ENCODE measurements at regions of chr10 and their contacts with region 1.

Region 1: DNA sequence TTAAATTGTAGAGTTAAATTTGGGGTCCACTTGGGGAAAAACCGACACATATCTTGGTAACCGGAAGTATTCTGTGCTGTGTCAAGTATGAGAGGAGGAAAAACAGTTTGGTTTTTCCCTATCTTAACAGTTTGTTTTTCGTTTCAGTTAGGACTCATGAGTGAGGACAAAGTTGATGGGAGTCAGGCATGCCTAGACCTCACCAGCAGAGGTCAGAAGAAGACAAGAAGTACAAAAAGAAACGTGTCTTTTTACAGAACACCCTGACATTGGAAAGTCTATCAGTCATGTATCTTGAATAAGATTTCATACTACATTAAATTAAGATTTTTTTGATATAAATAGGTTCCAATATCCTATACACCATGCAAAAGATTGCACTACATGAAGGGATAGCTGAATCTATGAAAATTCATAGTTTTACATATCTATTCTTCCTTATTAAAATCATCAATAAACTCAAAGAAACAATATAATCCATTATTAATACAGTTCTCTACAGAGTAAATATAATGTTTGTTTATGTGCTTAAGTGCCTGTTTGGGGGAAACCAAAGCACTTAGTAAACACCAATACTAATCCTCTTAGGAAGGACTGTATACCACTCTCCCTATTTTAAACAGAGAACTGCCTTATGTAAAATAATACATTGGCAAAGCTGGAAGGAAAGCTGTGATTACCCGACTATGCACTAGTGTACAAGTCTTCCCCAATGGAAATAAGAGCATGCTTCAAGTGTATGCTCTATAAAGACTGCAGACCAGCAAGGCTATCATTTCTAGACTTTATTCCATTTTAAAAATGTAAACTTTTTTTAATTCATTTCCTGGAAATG is 95.6 kb downstream of the USP6NL start:
- DNase-seq: peak in 1 of 2 donors; percentile 49
- H3K4me3 ChIP-seq: no peak overlapping the region
- H3K27ac ChIP-seq: no peak overlapping the region
- H3K4me1 ChIP-seq: no peaks in the 10 kb centered on the region
- H3K27me3 ChIP-seq: no peaks in the 10 kb centered on the region
- CTCF ChIP-seq: peak; percentile 81 to 88

Region 2: GRCh38 chr10:11468126-11468742 is 47.6 kb before region 1 on chr10:
- intact Hi-C with region 1: no loop called
- DNase-seq: no peak
- H3K4me3 ChIP-seq: no peak overlapping the region
- H3K27ac ChIP-seq: no peak overlapping the region
- H3K4me1 ChIP-seq: no peaks in the 10 kb centered on the region
- H3K27me3 ChIP-seq: no peaks in the 10 kb centered on the region
- CTCF ChIP-seq: no peak

Region 3: DNA sequence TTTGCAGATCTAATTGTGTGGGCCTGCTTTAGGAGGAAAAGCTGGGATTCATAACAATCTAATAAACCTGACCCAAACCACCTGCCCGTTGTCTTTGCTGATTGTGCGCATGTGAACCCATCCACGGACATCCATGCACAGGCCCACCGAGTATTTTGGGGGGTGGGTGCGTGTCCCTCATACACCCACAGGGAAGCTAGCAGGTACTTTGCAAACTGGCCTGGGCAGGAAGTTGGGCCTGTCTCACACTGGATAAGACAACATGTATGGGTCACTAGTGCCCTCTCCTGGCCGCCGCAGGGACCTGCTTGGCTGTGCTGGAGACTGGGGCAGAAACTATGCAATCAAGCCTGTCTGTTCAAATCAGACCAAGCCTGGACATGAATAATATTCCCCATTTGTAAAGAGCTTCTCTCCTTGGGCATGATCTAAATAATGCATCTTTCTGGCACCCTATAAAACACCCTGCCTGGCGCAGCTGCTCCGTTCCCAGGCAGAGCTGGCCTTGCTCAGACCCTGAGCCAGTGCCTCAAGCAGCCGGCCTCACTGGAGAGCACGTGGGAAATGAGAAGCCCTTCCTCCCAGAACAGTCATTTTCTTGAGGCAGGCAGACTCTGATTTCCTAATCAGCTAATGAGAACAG is 242.1 kb after region 1 on chr10:
- intact Hi-C with region 1: loop called (anchors 5 kb)
- DNase-seq: peak; percentile 91 to 93
- H3K4me3 ChIP-seq: no peak overlapping the region
- H3K27ac ChIP-seq: peak overlapping the region; percentile 64 to 76
- H3K4me1 ChIP-seq: peaks cover 0 to 19% (median 16%) of the 10 kb centered on the region in 4 donors
- H3K27me3 ChIP-seq: no peaks in the 10 kb centered on the region
- CTCF ChIP-seq: peak; percentile 92